GM12878 (cell line): ENCODE measurements at regions of chr10 and their contacts with region 1.

Region 1: DNA sequence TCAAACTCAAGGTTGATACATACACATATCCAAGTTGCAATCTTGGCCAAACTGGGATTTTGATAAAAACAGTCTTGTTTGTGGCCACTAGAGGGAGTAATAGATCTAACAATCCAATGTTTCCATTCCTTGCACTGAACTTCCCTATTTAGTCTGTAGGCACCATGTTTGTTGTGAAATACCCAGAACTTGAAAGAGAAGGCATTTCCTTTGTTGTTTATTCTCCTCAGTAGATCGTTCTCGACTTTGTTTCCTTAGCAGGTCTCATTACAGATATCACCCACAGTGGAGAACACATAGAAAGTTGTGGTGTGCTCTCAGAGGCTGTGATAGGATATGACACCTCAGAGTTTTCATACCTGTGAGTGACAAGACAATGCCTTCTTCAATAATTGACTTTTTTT is 70.3 kb upstream of the MXI1 start:
- DNase-seq: peak; percentile 48
- ATAC-seq: peak; percentile 83
- H3K4me3 ChIP-seq: no peak overlapping the region
- H3K27ac ChIP-seq: no peak overlapping the region
- H3K4me1 ChIP-seq: peaks cover 5% of the 10 kb centered on the region
- H3K27me3 ChIP-seq: no peaks in the 10 kb centered on the region; a peak in 1 of 4 replicates
- CTCF ChIP-seq: peak; percentile 57 to 79 (median 72)
- EP300 ChIP-seq: no peak
- POLR2A ChIP-seq: no peak
- RAD21 ChIP-seq: peak; percentile 89

Region 2: DNA sequence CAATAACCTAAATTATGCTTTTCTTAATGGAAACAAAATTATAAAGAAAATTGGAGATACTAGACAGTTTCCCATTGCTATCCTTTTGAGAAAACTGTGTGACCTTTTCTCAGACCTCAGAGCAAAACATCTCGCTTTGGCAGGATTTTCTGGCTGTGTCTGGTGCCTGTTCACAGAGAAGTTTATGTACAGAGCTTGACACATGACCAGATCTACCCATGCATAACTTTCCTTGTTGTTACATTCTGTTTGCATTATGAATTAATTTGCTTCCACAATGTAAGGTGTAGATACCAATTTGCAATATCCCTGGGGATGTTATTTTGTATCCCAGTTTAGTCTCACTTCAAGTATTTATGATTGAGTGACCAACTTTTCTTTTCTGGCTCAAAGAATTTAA is 778.8 kb before region 1 on chr10:
- CTCF ChIA-PET with region 1: no interaction called
- POLR2A ChIA-PET with region 1: no interaction called
- RAD21 ChIA-PET with region 1: no interaction called
- SMC1A ChIA-PET with region 1: no interaction called
- in situ Hi-C with region 1: no loop called
- intact Hi-C with region 1: no loop called
- DNase-seq: no peak
- ATAC-seq: no peak
- H3K4me3 ChIP-seq: no peak overlapping the region
- H3K27ac ChIP-seq: no peak overlapping the region
- H3K4me1 ChIP-seq: no peaks in the 10 kb centered on the region
- H3K27me3 ChIP-seq: no peaks in the 10 kb centered on the region
- CTCF ChIP-seq: no peak
- EP300 ChIP-seq: no peak
- POLR2A ChIP-seq: no peak
- RAD21 ChIP-seq: no peak

Region 3: GRCh38 chr10:109978481-109978880 is 158.7 kb before region 1 on chr10:
- CTCF ChIA-PET with region 1: interaction called, 20 read pairs
- POLR2A ChIA-PET with region 1: no interaction called
- RAD21 ChIA-PET with region 1: interaction called, 7 read pairs
- SMC1A ChIA-PET with region 1: interaction called, 7 read pairs
- in situ Hi-C with region 1: no loop called
- intact Hi-C with region 1: loop called (anchors 2 kb)
- DNase-seq: no peak
- ATAC-seq: peak; percentile 77
- H3K4me3 ChIP-seq: no peak overlapping the region
- H3K27ac ChIP-seq: no peak overlapping the region
- H3K4me1 ChIP-seq: no peaks in the 10 kb centered on the region
- H3K27me3 ChIP-seq: peaks cover 0 to 2% of the 10 kb centered on the region in 2 experiments; a peak in 1 of 4 replicates
- CTCF ChIP-seq: peak; percentile 74 to 86 (median 81)
- EP300 ChIP-seq: no peak
- POLR2A ChIP-seq: no peak
- RAD21 ChIP-seq: peak; percentile 82

Region 4: DNA sequence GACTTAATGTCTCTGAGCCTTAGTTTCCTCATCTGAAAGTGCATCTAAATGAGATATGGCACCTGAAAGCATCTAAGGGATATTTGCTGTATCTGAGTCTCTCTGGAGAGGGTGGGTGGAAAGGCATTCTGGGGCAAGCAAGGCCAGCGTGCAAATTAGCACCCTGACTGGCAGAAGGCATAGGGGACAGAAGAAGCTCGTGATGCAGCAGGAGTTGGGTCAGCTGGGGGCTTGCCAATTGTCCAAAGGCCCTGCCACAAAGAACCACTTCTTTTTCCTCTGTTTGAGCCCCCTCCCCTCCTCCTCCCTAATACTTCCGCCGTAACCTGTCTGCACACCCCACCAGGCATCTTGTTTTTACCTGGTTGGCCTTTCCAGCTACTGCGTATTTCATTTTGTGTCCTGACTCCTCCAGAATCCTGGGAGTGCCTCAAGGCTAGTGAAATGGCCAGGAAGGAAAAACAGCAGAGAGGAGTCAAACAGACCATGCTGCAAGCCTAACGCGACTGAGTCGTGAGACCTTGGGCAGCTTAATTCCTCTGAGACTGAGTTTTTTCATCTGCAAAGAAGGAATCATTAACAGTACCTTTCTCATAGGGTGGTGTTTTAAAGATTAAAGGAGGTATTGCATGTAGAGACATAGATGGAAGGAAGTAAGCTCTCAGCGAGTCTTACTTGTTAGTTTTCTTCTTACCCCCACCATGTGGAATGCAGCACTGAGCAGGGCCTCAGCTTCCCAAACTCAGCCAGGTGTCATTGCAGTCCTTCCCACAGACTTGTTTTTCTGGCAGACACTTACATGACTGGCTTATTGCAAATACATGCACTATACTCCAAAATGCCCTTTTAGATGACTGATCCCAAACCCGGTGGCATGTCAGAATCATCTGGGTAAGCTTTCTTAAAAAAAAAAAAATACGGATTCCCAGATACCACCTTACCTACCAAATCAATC is 21.2 kb after region 1 on chr10:
- CTCF ChIA-PET with region 1: interaction called, 14 read pairs
- POLR2A ChIA-PET with region 1: no interaction called
- RAD21 ChIA-PET with region 1: interaction called, 3 read pairs
- SMC1A ChIA-PET with region 1: no interaction called
- in situ Hi-C with region 1: no loop called
- intact Hi-C with region 1: no loop called
- DNase-seq: no peak
- ATAC-seq: no peak
- H3K4me3 ChIP-seq: no peak overlapping the region
- H3K27ac ChIP-seq: no peak overlapping the region
- H3K4me1 ChIP-seq: peaks cover 10% of the 10 kb centered on the region
- H3K27me3 ChIP-seq: peaks cover 0 to 5% of the 10 kb centered on the region in 2 experiments; a peak in 3 of 4 replicates
- CTCF ChIP-seq: no peak
- EP300 ChIP-seq: no peak
- POLR2A ChIP-seq: no peak
- RAD21 ChIP-seq: no peak

Region 5: DNA sequence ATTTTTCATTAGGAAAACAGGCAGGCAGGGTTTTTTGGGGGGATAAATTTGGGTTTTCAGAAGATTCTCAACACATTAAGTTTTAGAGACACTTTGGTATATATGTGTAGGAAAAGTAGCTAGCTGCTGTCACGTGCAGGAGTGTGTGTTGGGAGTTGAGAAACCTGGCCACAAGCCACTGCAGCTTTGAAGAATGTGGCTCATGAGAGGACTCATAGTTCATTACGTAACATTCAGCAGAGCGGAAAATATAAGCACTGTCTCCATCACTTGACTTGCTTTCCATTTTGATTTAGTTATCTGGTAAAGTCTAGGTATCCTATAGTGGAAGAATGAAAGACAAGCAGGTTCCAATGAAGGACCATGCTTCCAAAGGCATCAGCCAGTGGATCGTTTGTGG is 136.3 kb after region 1 on chr10:
- CTCF ChIA-PET with region 1: interaction called, 105 read pairs
- POLR2A ChIA-PET with region 1: no interaction called
- RAD21 ChIA-PET with region 1: interaction called, 42 read pairs
- SMC1A ChIA-PET with region 1: interaction called, 34 read pairs
- in situ Hi-C with region 1: no loop called
- intact Hi-C with region 1: no loop called
- DNase-seq: peak; percentile 28
- ATAC-seq: peak; percentile 88
- H3K4me3 ChIP-seq: peak overlapping the region; percentile 10; the same call in 1 of the 2 replicates
- H3K27ac ChIP-seq: no peak overlapping the region
- H3K4me1 ChIP-seq: peaks cover 7% of the 10 kb centered on the region
- H3K27me3 ChIP-seq: no peaks in the 10 kb centered on the region; a peak in 2 of 4 replicates
- CTCF ChIP-seq: no peak
- EP300 ChIP-seq: no peak
- POLR2A ChIP-seq: no peak
- RAD21 ChIP-seq: no peak

Region 6: GRCh38 chr10:110296966-110297365 is 159.8 kb after region 1 on chr10:
- CTCF ChIA-PET with region 1: interaction called, 10 read pairs
- POLR2A ChIA-PET with region 1: no interaction called
- RAD21 ChIA-PET with region 1: interaction called, 3 read pairs
- SMC1A ChIA-PET with region 1: interaction called, 8 read pairs
- in situ Hi-C with region 1: no loop called
- intact Hi-C with region 1: no loop called
- DNase-seq: no peak
- ATAC-seq: no peak
- H3K4me3 ChIP-seq: no peak overlapping the region
- H3K27ac ChIP-seq: no peak overlapping the region
- H3K4me1 ChIP-seq: no peaks in the 10 kb centered on the region
- H3K27me3 ChIP-seq: no peaks in the 10 kb centered on the region
- CTCF ChIP-seq: no peak
- EP300 ChIP-seq: no peak
- POLR2A ChIP-seq: no peak
- RAD21 ChIP-seq: no peak

Region 7: GRCh38 chr10:110363572-110364411 is 226.6 kb after region 1 on chr10:
- CTCF ChIA-PET with region 1: no interaction called
- POLR2A ChIA-PET with region 1: no interaction called
- RAD21 ChIA-PET with region 1: no interaction called
- SMC1A ChIA-PET with region 1: no interaction called
- in situ Hi-C with region 1: no loop called
- intact Hi-C with region 1: no loop called
- DNase-seq: no peak
- ATAC-seq: no peak
- H3K4me3 ChIP-seq: no peak overlapping the region
- H3K27ac ChIP-seq: no peak overlapping the region
- H3K4me1 ChIP-seq: peaks cover 45% of the 10 kb centered on the region
- H3K27me3 ChIP-seq: no peaks in the 10 kb centered on the region
- CTCF ChIP-seq: no peak
- EP300 ChIP-seq: no peak
- POLR2A ChIP-seq: no peak
- RAD21 ChIP-seq: no peak

Region 8: DNA sequence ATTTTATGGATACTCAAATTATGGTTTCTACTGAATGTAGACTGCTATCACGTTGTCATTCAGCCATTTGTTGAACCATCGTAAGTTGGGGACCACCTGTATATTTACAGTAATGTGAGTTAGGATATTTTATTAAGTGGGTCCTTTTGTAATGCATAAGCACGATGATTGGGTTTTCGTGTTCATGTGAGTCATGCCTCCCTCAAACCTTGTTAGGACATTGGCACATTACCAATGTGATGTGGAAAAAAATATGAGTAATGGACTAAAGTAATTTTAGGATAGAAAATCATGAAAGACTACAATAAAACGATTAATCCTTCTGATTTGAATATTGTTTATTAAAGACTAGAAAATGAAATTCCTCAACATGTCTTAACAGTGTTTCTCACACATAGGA is 439.1 kb after region 1 on chr10:
- CTCF ChIA-PET with region 1: interaction called, 3 read pairs
- POLR2A ChIA-PET with region 1: no interaction called
- RAD21 ChIA-PET with region 1: no interaction called
- SMC1A ChIA-PET with region 1: no interaction called
- in situ Hi-C with region 1: no loop called
- intact Hi-C with region 1: loop called (anchors 10 kb)
- DNase-seq: no peak
- ATAC-seq: no peak
- H3K4me3 ChIP-seq: no peak overlapping the region
- H3K27ac ChIP-seq: no peak overlapping the region
- H3K4me1 ChIP-seq: no peaks in the 10 kb centered on the region; the same call in 1 of the 2 replicates
- H3K27me3 ChIP-seq: no peaks in the 10 kb centered on the region
- CTCF ChIP-seq: no peak
- EP300 ChIP-seq: no peak
- POLR2A ChIP-seq: no peak
- RAD21 ChIP-seq: no peak

Region 9: DNA sequence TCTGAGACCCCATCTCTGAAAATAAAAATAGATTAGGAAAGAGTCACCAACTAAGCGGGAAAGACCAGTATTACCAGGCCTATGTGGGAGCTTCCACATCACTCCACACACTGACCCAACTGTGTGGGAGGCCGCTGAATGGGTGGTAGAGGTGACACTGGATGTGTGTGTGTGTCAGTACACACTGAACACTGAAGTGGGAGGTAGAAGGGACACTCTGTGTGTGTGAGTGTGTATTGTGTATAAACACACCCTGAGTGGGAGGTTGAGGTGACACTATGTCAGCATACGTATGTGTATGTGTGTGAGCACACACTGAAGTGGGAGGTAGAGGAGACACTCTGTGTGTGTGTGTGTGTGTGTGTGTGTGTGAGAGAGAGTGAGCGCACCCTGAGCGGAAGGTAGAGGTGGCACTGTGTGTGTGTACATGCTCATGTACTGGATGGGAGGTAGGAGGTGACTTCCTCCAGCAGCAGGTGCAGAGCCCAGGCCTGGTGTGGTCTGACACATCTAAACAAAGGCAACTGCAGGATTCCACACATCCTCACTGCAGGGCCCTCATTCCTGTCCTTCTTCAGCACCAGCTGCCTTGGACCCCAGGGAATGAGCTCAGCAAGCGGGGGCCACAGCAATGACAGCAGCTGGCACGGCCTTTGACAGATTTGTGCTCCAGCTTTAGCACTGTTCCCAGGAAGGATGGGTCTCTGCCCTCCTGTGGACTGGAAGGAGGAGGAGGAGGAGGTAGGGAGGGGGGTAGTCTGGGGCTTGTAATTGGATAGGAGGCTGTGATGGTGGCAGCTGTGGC is 480.5 kb after region 1 on chr10:
- CTCF ChIA-PET with region 1: no interaction called
- POLR2A ChIA-PET with region 1: no interaction called
- RAD21 ChIA-PET with region 1: no interaction called
- SMC1A ChIA-PET with region 1: no interaction called
- in situ Hi-C with region 1: no loop called
- intact Hi-C with region 1: no loop called
- DNase-seq: no peak
- ATAC-seq: no peak
- H3K4me3 ChIP-seq: no peak overlapping the region
- H3K27ac ChIP-seq: no peak overlapping the region
- H3K4me1 ChIP-seq: peaks cover 27% of the 10 kb centered on the region
- H3K27me3 ChIP-seq: no peaks in the 10 kb centered on the region
- CTCF ChIP-seq: no peak
- EP300 ChIP-seq: no peak
- POLR2A ChIP-seq: no peak
- RAD21 ChIP-seq: no peak

Region 10: GRCh38 chr10:111109501-111110242 is 972.5 kb after region 1 on chr10:
- CTCF ChIA-PET with region 1: no interaction called
- POLR2A ChIA-PET with region 1: no interaction called
- RAD21 ChIA-PET with region 1: no interaction called
- SMC1A ChIA-PET with region 1: no interaction called
- in situ Hi-C with region 1: no loop called
- intact Hi-C with region 1: no loop called
- DNase-seq: no peak
- ATAC-seq: no peak
- H3K4me3 ChIP-seq: no peak overlapping the region
- H3K27ac ChIP-seq: no peak overlapping the region
- H3K4me1 ChIP-seq: no peaks in the 10 kb centered on the region
- H3K27me3 ChIP-seq: no peaks in the 10 kb centered on the region; a peak in 1 of 4 replicates
- CTCF ChIP-seq: no peak
- EP300 ChIP-seq: no peak
- POLR2A ChIP-seq: no peak
- RAD21 ChIP-seq: no peak